Heart left ventricle (tissue), 16 donors: ENCODE measurements at regions of chr12 and their contacts with region 1.

Region 1: DNA sequence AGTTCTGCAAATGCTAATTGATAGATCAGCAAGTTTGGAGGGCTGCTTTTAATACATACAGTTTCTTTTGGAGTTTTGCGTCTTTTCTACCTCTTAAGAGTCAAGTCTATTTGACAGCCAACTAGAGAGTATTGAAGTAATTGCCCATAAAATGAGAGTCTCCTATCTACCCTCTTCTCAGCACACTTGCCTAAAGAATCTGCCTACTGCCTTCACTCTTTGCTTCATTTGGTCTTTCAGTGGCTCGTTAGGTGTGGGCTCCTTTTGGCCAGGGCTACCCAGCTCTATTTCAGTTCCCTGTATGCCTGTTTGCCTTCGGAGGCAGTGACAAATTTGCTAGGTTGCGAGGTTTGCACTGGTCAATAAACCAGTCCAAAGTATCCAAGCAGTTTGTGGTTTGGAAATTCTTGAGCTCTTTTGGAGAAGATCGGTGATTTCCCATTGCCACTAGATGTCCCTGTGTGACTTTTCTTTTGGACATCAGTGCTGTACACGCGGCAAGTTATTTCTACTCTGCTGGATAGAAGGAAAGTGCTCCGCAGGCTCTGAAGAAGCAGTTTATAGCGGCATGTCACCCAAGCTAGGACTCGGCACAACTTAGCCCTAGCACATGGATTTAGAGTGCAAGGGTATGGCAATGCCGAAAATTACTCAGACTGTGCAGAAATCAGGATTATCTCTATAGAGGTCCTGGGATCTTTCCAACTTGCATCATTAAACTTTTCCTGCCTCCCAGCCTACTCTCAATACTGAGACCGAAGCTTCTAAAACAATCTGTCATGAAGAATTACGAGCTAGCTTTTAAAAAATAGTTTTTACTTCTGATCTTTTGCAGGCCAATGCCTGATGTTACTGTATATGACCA is 38.6 kb downstream of the MGST1 start:
- DNase-seq: peak in 2 of 5 donors; percentile 10 to 22
- ATAC-seq: peak in 3 of 4 donors; percentile 59 to 78 (median 73)
- H3K4me3 ChIP-seq: peak overlapping the region in 2 of 12 donors; percentile 8 to 13
- H3K27ac ChIP-seq: peak overlapping the region in 1 of 12 donors; percentile 2
- H3K4me1 ChIP-seq: no peaks in the 10 kb centered on the region
- H3K27me3 ChIP-seq: peaks cover 0 to 8% (median 0%) of the 10 kb centered on the region in 9 donors
- CTCF ChIP-seq: peak in 10 of 12 donors; percentile 8 to 58 (median 42)
- POLR2A ChIP-seq: no peak

Region 2: GRCh38 chr12:16437281-16437861 is 51.4 kb after region 1 on chr12:
- intact Hi-C with region 1: no loop called
- DNase-seq: no peak
- ATAC-seq: no peak
- H3K4me3 ChIP-seq: no peak overlapping the region
- H3K27ac ChIP-seq: no peak overlapping the region
- H3K4me1 ChIP-seq: no peaks in the 10 kb centered on the region
- H3K27me3 ChIP-seq: no peaks in the 10 kb centered on the region
- CTCF ChIP-seq: no peak
- POLR2A ChIP-seq: no peak

Region 3: GRCh38 chr12:16691624-16692023 is 305.6 kb after region 1 on chr12:
- intact Hi-C with region 1: loop called in 1 of 10 experiments (anchors 10 kb)
- DNase-seq: no peak
- ATAC-seq: no peak
- H3K4me3 ChIP-seq: no peak overlapping the region
- H3K27ac ChIP-seq: no peak overlapping the region
- H3K4me1 ChIP-seq: no peaks in the 10 kb centered on the region
- H3K27me3 ChIP-seq: no peaks in the 10 kb centered on the region
- CTCF ChIP-seq: no peak
- POLR2A ChIP-seq: no peak

Region 4: DNA sequence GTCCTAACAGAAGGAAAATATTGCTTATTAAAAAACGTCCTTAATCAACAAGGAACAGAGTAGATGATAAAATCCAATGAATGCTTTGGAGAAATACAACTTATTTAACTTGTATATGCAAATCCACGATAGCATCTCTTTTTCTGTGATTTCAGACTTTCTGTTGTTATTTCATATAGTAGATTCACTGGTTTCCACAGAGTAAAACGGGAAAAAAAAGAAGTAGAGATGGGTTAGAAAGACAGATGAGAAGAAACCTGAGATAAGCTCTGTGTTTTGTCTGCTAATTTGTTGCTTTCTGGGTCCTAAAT is 1256.3 kb after region 1 on chr12:
- intact Hi-C with region 1: loop called in 4 of 10 experiments (anchors 5 to 10 kb)
- DNase-seq: no peak
- ATAC-seq: no peak
- H3K4me3 ChIP-seq: no peak overlapping the region
- H3K27ac ChIP-seq: no peak overlapping the region
- H3K4me1 ChIP-seq: peaks cover 0 to 3% (median 0%) of the 10 kb centered on the region in 12 donors
- H3K27me3 ChIP-seq: peaks cover 0 to 8% (median 0%) of the 10 kb centered on the region in 9 donors
- CTCF ChIP-seq: peak in 1 of 12 donors; percentile 5
- POLR2A ChIP-seq: no peak